Right ventricle myocardium inferior (tissue), 1 donor: ENCODE measurements at regions of chr10 and their contacts with region 1.

Region 1: GRCh38 chr10:84264611-84265141 is 19.8 kb downstream of the RGR start:
- DNase-seq: no peak
- ATAC-seq: peak; percentile 89

Region 2: GRCh38 chr10:84375011-84375410 is 110.3 kb after region 1 on chr10:
- intact Hi-C with region 1: loop called (anchors 2 kb)
- DNase-seq: no peak
- ATAC-seq: no peak

Region 3: GRCh38 chr10:84743483-84743882 is 478.8 kb after region 1 on chr10:
- intact Hi-C with region 1: loop called (anchors 10 kb)
- DNase-seq: no peak
- ATAC-seq: no peak